Activated CD4-positive, alpha-beta T cell treated with anti-CD3 and anti-CD28 coated beads for 36 hours (primary cell): ENCODE measurements at regions of chrX and their contacts with region 1.

Region 1: DNA sequence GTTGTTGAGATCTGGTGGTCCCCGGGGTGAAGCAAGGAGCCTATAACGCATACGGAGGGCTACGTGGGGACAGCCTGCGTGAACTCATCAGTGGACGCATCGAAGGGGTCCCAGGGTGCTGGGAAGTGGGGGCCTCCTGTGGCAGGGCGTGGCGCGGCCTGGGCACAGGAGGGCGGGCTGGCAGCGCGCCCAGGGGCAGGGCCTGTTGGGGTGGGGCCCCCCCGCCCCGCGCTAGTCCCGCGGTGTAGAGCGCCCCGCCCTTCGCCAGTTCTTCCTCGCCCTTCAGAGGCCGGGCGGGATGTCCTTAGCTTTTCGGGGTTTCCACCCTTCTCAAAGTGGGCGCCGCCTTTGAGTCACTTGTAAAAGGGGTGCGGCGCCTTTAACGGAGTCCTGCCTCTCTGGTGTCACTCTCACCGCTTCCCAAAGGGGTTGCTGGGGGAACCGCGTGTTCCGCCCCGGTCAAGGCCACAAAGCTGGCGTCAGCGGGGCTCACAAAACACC is 632 bp downstream of the PLP2 start:
- DNase-seq: peak; percentile 85
- ATAC-seq: peak; percentile 78
- H3K4me3 Mint-ChIP-seq: peak overlapping the region; percentile 88
- H3K27ac Mint-ChIP-seq: peak overlapping the region; percentile 93
- H3K4me1 Mint-ChIP-seq: peaks cover 31% of the 10 kb centered on the region
- H3K27me3 Mint-ChIP-seq: no peaks in the 10 kb centered on the region

Region 2: GRCh38 chrX:48813644-48814043 is 358.7 kb before region 1 on chrX:
- CTCF ChIA-PET with region 1: no interaction called
- POLR2A ChIA-PET with region 1: no interaction called
- intact Hi-C with region 1: no loop called
- DNase-seq: no peak
- ATAC-seq: no peak
- H3K4me3 Mint-ChIP-seq: no peak overlapping the region
- H3K27ac Mint-ChIP-seq: no peak overlapping the region
- H3K4me1 Mint-ChIP-seq: no peaks in the 10 kb centered on the region
- H3K27me3 Mint-ChIP-seq: no peaks in the 10 kb centered on the region

Region 3: GRCh38 chrX:49184294-49185061 is 12.1 kb after region 1 on chrX:
- CTCF ChIA-PET with region 1: interaction called, 3 read pairs
- POLR2A ChIA-PET with region 1: interaction called, 4 read pairs
- intact Hi-C with region 1: loop called in 1 of 2 experiments (anchors 1 kb)
- DNase-seq: peak; percentile 74
- ATAC-seq: peak; percentile 75
- H3K4me3 Mint-ChIP-seq: peak overlapping the region; percentile 86
- H3K27ac Mint-ChIP-seq: peak overlapping the region; percentile 83
- H3K4me1 Mint-ChIP-seq: peaks cover 12% of the 10 kb centered on the region
- H3K27me3 Mint-ChIP-seq: no peaks in the 10 kb centered on the region

Region 4: DNA sequence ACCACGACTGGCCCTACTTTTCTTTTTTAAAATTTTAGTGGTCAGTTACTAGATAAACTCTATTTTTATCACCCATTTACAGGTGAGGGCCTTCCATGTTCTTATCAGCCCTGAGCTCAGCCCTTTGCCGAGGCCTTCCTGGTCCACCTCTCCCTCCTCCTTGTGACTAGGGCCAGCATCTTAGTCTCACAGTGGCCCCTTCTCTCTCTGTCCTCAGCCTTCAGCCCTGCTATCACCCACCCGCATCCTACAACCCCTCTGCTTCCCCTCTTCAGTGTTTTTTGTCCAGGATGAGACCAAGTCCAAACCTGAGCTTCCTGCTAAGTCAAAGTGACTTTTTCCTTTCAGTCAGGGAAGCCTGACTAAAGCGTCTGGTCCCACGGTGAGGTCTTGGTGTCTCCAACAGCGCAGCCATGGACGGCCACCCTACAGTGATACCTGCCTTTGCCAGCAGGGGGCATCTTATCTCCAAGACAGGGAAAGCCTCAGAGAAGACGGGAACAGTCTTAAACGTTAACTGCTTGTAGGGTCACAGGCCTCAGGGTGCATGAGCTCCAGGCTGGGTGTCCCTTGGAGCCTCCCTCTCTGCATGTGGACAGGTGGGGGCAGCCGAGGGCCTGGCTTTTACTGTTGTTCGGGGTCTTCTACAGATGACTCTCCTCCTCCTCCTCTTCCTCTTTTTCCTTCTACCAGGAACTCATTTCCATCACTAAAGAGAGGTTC is 119.4 kb after region 1 on chrX:
- CTCF ChIA-PET with region 1: no interaction called
- POLR2A ChIA-PET with region 1: no interaction called
- intact Hi-C with region 1: no loop called
- DNase-seq: peak; percentile 86
- ATAC-seq: peak; percentile 93
- H3K4me3 Mint-ChIP-seq: no peak overlapping the region
- H3K27ac Mint-ChIP-seq: peak overlapping the region; percentile 56
- H3K4me1 Mint-ChIP-seq: peaks cover 28% of the 10 kb centered on the region
- H3K27me3 Mint-ChIP-seq: no peaks in the 10 kb centered on the region